ENCODE measurements at regions of chr9 and their contacts with region 1.

Region 1: DNA sequence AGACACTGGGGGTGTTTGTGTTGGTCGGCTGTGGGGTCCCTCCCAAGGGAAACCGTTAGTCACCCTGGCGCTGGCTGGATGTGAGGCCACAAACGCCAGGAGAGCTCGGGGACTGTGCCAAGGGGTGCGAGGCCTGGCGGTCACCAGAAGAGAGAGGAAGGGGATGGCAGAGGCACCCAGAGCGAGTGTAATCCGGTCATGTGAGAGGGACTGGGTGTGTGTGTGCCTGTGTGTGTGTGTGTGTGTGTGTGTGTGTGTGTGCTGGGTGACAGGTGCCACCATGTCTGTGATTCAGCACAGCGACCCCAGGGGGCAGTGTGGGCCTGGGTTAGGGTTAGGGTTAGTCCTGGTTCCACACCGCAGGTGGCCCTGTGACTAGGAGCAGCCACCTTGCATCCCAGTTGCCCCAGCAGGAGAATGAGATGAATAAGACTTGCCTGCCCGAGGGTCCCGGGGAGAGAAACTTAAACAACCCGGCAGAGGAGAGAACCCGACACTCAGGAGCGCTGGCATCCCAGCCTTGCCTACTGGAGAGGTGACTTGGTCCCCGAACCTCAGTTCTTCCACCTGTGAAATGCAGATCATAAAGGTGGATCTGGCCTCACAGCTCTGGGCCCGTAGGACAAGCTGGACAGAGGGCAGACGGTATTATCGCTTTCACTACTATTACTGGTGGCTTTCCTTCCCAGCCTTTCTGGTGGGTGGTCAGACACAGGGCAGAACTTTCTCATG is 1.4 kb upstream of the ADAMTSL2 start:
- DNase-seq: peak; percentile 79 to 88 (median 87)
- ATAC-seq: peak; percentile 87
- H3K4me3 ChIP-seq: no peak overlapping the region
- H3K4me1 ChIP-seq: peaks cover 5% of the 10 kb centered on the region
- CTCF ChIP-seq: no peak

Region 2: GRCh38 chr9:133715866-133716563 is 182.9 kb after region 1 on chr9:
- intact Hi-C with region 1: loop called in 1 of 2 experiments (anchors 5 kb)
- DNase-seq: peak in 2 of 3 donors; percentile 31 to 39
- ATAC-seq: no peak
- H3K4me3 ChIP-seq: no peak overlapping the region
- H3K4me1 ChIP-seq: no peaks in the 10 kb centered on the region
- CTCF ChIP-seq: no peak

Region 3: DNA sequence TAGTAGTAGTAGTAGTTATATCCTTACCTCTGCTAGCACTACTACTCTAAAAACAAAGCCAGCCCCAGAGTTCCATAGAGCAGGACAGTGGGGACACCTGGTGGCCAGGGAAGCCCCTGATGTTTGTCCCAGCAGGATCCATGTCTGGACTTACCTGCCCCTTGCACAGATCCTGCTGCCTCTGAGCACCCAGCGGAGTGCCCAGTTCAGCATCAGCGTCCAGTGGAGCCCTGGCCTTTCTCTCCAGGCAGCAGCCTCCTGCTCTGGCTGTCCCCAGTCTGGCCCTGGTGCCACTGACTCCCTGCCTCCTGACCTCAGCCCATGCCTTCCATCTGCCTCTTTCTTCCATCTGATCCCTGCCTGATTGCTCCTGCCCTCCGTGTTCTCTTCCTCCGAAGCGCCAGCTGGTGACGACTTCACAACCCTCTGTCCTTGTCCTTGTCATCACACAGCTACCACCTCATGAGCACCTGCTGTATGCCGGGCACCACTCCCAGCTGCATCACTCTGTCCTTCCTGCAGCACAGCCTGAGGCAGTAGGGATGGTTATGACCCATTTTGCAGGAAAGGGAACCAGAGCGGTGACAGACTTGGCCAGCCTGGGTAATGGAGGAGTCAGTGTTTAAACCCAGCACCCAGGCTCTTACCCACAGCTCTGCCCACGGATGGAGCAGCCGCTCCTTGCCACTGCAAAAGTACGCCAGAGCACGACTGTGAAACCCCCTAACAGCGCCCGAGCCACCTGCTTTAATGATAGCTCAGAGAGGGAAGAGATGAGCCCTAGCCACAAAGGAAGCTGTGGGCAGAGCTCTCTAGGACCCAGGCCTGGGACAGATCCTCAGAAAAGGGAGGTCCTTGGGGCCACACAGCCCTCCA is 193.5 kb after region 1 on chr9:
- intact Hi-C with region 1: loop called in 1 of 2 experiments (anchors 5 kb)
- DNase-seq: peak in 2 of 3 donors; percentile 71 to 74
- ATAC-seq: peak; percentile 70
- H3K4me3 ChIP-seq: no peak overlapping the region
- H3K4me1 ChIP-seq: no peaks in the 10 kb centered on the region
- CTCF ChIP-seq: no peak